GM13976 (cell line): ENCODE measurements at regions of chr1 and their contacts with region 1.

Region 1: GRCh38 chr1:223091896-223092295 is 51.2 kb downstream of the TLR5 start:
- DNase-seq: no peak
- CTCF ChIP-seq: no peak

Region 2: GRCh38 chr1:222792744-222793143 is 299.2 kb before region 1 on chr1:
- in situ Hi-C with region 1: loop called (anchors 10 kb)
- DNase-seq: peak; percentile 33
- CTCF ChIP-seq: no peak